Activated B cell treated with CpG ODN at 0.5 μM for 24 hours (primary cell): ENCODE measurements at regions of chr3 and their contacts with region 1.

Region 1: GRCh38 chr3:196502775-196503195 is 783 bp downstream of the RNF168 start:
- DNase-seq: peak; percentile 28
- ATAC-seq: peak; percentile 13
- H3K4me3 Mint-ChIP-seq: peak overlapping the region; percentile 98
- H3K27ac Mint-ChIP-seq: peak overlapping the region; percentile 90
- H3K4me1 Mint-ChIP-seq: peaks cover 38% of the 10 kb centered on the region
- H3K27me3 Mint-ChIP-seq: no peaks in the 10 kb centered on the region
- CTCF ChIP-seq: no peak

Region 2: DNA sequence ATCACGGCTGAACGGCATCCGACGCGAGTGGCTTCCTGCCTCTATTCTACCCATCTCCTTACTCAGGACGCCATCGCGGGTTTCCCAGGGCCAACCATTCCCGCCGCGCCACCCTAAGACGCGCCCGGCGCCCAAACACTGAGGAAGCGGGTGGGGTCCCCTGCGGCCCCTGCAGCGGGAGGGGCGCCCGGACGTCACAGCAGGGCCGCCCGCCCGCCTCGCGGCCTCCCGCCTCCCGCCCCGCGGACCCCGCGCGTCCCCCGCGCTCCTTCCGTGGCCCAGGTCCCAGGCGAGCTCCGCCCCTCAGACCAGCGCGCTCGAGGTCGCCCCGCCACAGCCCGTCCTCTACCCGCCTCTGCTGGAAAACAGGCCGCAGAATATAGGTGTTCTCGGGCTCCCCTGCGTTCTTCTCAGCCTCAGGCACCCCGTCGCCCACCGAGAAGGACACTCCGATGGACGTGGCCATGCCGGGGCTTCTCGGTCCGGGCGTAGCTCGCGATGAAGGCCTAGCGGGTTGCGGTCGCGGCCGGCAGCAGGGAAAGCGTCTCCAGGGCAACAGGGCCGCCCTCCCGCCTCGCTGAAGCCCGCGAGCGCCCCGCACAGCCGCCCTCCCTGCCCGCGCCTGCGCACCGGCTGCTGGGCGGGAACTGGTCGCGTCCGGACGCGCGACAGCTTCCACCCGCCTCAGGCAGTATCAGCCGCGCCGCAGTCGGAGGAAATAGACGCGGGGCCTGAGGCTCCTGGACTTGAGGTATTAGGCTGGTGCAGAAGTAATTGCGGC is 184.9 kb before region 1 on chr3 and contains the start of gene DYNLT2B:
- CTCF ChIA-PET with region 1: no interaction called
- POLR2A ChIA-PET with region 1: interaction called, 4 read pairs
- intact Hi-C with region 1: loop called (anchors 1 kb)
- DNase-seq: peak; percentile 87
- ATAC-seq: peak; percentile 91
- H3K4me3 Mint-ChIP-seq: peak within 1 kb of the TSS; percentile 94
- H3K27ac Mint-ChIP-seq: peak within 1 kb of the TSS; percentile 97
- H3K4me1 Mint-ChIP-seq: peaks cover 2% of the 10 kb centered on the region
- H3K27me3 Mint-ChIP-seq: no peaks in the 10 kb centered on the region
- CTCF ChIP-seq: no peak
- total RNA-seq, gene DYNLT2B: 5.1 and 5.2 TPM in 2 replicates

Region 3: DNA sequence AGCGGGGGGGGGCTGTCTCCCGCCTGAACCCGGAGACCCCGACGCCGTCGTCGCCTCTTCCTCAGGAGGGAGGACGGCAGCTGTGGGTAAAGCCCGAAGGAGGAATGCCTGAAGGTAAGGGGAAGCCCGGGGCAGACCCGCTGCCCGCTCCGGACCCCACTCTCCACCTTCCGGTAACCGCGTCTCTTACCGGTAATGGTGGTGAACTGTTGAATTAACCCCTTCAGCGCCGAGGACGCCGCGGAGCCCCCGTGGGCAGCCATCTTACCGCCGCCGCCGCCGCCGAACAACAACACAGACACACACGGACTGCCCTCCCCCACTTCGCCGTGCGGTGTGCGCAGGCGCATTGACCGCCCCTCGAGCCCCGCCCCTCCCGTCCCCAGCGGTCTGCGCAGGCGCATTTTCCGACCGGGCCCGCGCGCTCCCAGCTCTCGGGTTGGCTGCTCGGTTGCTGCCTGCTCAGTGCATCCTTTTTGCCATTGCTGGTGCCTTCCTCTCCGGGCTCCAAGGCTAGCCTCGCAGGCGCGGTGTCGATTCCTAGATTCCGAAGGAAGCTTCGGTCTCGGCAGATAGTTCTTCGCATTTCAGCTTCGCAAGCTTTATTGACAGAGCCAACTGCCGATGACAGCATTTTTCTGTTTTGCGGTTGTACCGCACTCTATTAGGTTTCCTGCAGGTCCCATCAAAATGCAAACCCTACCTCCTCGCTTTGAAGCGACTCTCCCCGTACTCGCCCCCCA is 70.5 kb before region 1 on chr3 and contains the start of gene UBXN7:
- CTCF ChIA-PET with region 1: no interaction called
- POLR2A ChIA-PET with region 1: interaction called, 10 read pairs
- intact Hi-C with region 1: loop called (anchors 1 kb)
- DNase-seq: peak; percentile 92
- ATAC-seq: peak; percentile 81
- H3K4me3 Mint-ChIP-seq: peak within 1 kb of the TSS; percentile 96
- H3K27ac Mint-ChIP-seq: peak within 1 kb of the TSS; percentile 80
- H3K4me1 Mint-ChIP-seq: peaks cover 22% of the 10 kb centered on the region
- H3K27me3 Mint-ChIP-seq: no peaks in the 10 kb centered on the region
- CTCF ChIP-seq: no peak
- total RNA-seq, gene UBXN7: 60.8 and 66.5 TPM in 2 replicates

Region 4: DNA sequence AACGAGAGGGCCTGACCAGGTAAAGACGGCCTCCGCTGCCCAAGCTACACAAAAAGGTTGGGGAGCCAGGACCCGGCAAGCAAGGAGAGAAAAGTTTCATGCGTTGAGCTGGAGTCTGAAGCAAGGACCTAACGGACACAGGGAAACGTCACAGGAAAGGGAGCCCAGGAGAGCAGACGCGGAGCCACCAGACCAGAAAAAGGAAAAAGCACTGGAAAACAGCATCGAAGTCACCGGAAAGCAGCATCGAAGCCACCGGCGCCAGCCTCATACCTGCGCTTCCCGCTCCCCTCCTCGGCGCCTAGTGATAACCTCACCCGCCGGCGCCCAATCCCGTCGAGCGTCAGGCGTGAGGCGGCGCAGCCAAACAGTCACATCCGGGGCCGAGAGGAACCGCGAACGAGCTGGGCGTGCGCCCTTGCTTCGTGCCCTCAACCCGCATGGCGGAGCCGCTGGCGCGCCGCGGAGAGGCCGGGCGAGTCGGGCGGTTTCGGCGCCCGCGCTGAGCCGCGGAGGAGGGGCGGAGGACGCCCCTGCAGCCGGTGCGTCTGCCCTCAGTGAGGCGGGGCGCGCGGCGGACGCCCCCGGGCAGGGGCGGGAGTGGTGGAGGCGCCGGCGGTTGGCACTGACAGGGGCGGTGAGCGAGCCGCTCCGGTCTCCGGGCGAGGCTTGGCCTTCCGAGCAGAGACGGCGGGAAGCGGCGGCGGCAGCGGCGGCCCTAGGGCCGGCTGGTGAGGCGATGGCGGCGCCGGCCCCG is 65.6 kb after region 1 on chr3 and contains the starts of genes FBXO45 and WDR53:
- CTCF ChIA-PET with region 1: no interaction called
- POLR2A ChIA-PET with region 1: interaction called, 5 read pairs
- intact Hi-C with region 1: loop called (anchors 1 kb)
- DNase-seq: peak; percentile 92
- ATAC-seq: peak; percentile 90
- H3K4me3 Mint-ChIP-seq: peak within 1 kb of the TSS; percentile 98
- H3K27ac Mint-ChIP-seq: peak within 1 kb of the TSS; percentile 97
- H3K4me1 Mint-ChIP-seq: peaks cover 29% of the 10 kb centered on the region
- H3K27me3 Mint-ChIP-seq: no peaks in the 10 kb centered on the region
- CTCF ChIP-seq: no peak
- total RNA-seq, gene FBXO45: 5.7 and 6.5 TPM in 2 replicates
- total RNA-seq, gene WDR53: 14.1 and 14.3 TPM in 2 replicates

Region 5: DNA sequence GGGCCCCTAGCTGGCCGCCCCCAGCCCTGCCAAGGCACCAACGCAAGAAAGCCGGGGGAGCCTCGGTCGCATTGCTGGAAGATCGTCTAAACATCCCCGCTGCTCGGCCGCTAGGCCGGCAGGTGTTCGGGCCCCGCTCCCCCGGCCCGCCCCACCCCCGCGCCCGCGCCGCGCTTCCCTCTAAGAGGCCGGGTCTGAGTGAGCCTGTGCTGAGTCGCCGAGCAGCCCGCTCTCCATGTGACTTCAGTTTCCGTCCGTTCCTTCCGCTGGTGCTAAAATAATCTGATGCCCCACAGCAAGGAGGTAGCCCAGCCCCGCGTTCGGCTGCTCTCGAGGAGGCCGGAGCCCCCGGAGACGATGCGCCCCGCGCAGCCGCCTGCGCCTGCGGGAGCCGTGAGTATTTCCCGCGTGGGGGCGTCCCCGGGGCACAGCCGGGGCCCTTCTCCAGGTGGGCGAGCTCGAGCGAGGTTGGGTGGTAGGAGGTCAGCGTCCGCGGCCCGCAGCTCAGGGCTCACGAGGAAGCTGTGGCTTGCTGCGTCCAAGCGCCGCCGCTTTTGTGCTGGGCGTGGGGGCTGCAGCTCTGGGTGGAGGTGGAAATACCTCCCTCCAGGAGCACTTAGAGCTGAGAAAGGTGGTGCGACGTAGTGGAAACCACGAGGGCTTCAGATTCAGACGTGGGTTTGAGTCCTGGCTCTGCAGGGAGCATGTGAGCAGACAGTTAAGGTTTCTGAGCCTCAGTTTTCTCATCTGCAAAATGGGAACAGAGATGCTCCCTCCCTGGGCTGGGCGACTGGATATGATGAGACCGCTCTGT is 136.9 kb after region 1 on chr3 and contains the start of gene NRROS:
- CTCF ChIA-PET with region 1: no interaction called
- POLR2A ChIA-PET with region 1: interaction called, 3 read pairs
- intact Hi-C with region 1: loop called (anchors 1 kb)
- DNase-seq: peak; percentile 67
- ATAC-seq: peak; percentile 51
- H3K4me3 Mint-ChIP-seq: peak within 1 kb of the TSS; percentile 90
- H3K27ac Mint-ChIP-seq: peak within 1 kb of the TSS; percentile 99
- H3K4me1 Mint-ChIP-seq: peaks cover 78% of the 10 kb centered on the region
- H3K27me3 Mint-ChIP-seq: no peaks in the 10 kb centered on the region
- CTCF ChIP-seq: no peak
- total RNA-seq, gene NRROS: 88.5 and 92.4 TPM in 2 replicates

Region 6: DNA sequence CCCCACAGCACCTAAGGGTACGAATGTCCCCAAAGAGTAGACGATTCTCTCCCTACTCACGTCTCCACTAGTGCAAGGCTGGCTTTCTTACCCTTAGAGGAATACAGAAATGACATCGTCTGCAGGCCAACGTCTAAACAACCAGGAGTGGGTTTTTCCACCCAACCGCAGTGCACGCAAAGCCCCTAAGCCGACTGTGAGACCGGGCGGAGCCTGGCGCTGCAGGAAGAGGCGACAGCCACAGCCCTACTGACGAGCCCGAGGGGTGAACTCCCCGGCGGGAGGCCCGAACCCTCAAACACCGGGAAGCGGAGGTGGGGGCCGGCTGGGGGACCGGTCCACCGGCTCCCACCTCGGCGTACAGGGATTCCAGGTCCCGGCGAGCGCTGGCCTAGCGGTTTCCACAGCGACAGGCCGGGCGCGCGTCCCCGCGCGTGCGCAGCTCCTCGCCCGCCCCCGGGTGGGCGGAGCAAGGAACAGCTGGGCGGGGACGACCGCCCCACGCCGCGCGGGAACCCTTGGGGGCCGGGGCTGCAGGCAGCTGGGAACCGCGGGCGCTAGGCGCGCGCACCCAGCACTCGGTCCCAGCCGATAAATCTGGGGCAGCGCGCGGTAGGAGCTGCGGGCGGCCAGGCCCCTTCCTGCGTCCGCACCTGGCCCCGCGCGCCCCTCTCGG is 209.2 kb after region 1 on chr3 and contains the starts of genes CEP19 and PIGX:
- CTCF ChIA-PET with region 1: no interaction called
- POLR2A ChIA-PET with region 1: interaction called, 13 read pairs
- intact Hi-C with region 1: loop called (anchors 2 kb)
- DNase-seq: peak; percentile 96
- ATAC-seq: peak; percentile 80
- H3K4me3 Mint-ChIP-seq: peak within 1 kb of the TSS; percentile 91
- H3K27ac Mint-ChIP-seq: peak within 1 kb of the TSS; percentile 98
- H3K4me1 Mint-ChIP-seq: peaks cover 20% of the 10 kb centered on the region
- H3K27me3 Mint-ChIP-seq: no peaks in the 10 kb centered on the region
- CTCF ChIP-seq: no peak
- total RNA-seq, gene CEP19: 4.0 and 4.1 TPM in 2 replicates
- total RNA-seq, gene PIGX: 18.0 and 21.8 TPM in 2 replicates

Region 7: GRCh38 chr3:196867507-196868296 is 364.9 kb after region 1 on chr3 and contains the start of gene SENP5:
- CTCF ChIA-PET with region 1: no interaction called
- POLR2A ChIA-PET with region 1: interaction called, 4 read pairs
- intact Hi-C with region 1: loop called (anchors 5 kb)
- DNase-seq: peak; percentile 87
- ATAC-seq: peak; percentile 97
- H3K4me3 Mint-ChIP-seq: peak within 1 kb of the TSS; percentile 93
- H3K27ac Mint-ChIP-seq: peak within 1 kb of the TSS; percentile 89
- H3K4me1 Mint-ChIP-seq: peaks cover 28% of the 10 kb centered on the region
- H3K27me3 Mint-ChIP-seq: no peaks in the 10 kb centered on the region
- CTCF ChIP-seq: no peak
- total RNA-seq, gene SENP5: 35.8 and 45.2 TPM in 2 replicates